Activated B cell treated with CpG ODN at 0.5 μM for 24 hours (primary cell): ENCODE measurements at regions of chr3 and their contacts with region 1.

Region 1: GRCh38 chr3:57692259-57693147 is at the start of gene DENND6A:
- DNase-seq: peak; percentile 95
- ATAC-seq: peak; percentile 86
- H3K4me3 Mint-ChIP-seq: peak within 1 kb of the TSS; percentile 89
- H3K27ac Mint-ChIP-seq: peak within 1 kb of the TSS; percentile 85
- H3K4me1 Mint-ChIP-seq: peaks cover 35% of the 10 kb centered on the region
- H3K27me3 Mint-ChIP-seq: no peaks in the 10 kb centered on the region
- CTCF ChIP-seq: no peak
- total RNA-seq, gene DENND6A: 21.5 and 25.7 TPM in 2 replicates

Region 2: DNA sequence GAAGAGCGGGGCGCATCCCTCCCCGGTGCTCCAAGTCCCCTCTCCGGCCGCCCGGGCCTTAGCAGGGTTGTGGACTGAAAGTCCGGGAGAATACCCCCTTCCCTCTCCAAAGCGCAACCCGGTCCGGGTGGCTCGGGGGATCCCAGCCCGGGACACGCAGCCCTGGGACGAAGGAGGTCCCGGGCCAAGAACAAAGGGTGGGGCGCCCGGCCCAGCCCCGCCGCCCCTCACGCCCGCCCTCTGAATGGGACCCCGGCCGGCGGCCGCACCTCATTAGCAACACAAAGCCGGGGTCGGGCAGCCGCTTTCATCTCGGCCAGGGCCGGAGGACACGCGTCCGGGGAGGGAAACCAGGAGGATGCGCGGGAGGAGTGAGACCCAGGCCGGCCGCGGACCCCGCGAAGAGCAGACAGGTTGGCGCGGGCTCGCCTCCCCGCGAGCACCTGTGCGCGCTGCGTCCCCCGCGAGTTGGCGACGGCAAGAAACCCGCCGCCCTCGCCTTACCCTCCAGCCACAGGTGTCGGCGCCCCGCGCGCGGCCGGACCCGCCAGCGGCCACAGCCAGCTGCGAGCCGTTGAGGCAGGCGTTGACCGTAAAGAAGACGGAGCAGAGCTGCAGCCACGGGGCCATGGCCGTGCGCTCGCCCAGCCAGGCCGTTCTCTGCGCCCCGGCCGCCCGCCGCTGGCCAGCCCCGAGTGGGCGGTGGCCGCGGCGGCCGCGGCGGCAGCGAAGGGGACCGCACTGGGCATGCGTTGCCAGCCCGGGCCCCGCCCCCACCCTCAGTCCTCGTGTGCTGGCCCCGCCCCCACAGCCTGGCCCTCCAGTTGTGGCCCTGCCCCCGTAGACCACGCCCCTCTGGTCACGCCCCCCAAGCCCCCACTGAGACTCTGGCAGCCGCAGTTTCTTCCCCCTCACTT is 527.6 kb before region 1 on chr3 and contains the start of gene IL17RD:
- CTCF ChIA-PET with region 1: no interaction called
- POLR2A ChIA-PET with region 1: no interaction called
- intact Hi-C with region 1: no loop called
- DNase-seq: peak; percentile 60
- ATAC-seq: peak; percentile 93
- H3K4me3 Mint-ChIP-seq: peak within 1 kb of the TSS; percentile 84
- H3K27ac Mint-ChIP-seq: no peak within 1 kb of the TSS
- H3K4me1 Mint-ChIP-seq: peaks cover 11% of the 10 kb centered on the region
- H3K27me3 Mint-ChIP-seq: peaks cover 48% of the 10 kb centered on the region
- CTCF ChIP-seq: no peak
- total RNA-seq, gene IL17RD: not detected in 2 replicates

Region 3: GRCh38 chr3:57587905-57588304 is 104.6 kb before region 1 on chr3:
- CTCF ChIA-PET with region 1: no interaction called
- POLR2A ChIA-PET with region 1: no interaction called
- intact Hi-C with region 1: no loop called
- DNase-seq: no peak
- ATAC-seq: no peak
- H3K4me3 Mint-ChIP-seq: no peak overlapping the region
- H3K27ac Mint-ChIP-seq: no peak overlapping the region
- H3K4me1 Mint-ChIP-seq: peaks cover 31% of the 10 kb centered on the region
- H3K27me3 Mint-ChIP-seq: no peaks in the 10 kb centered on the region
- CTCF ChIP-seq: no peak

Region 4: GRCh38 chr3:57755668-57756527 is 63.4 kb after region 1 on chr3 and contains the start of gene SLMAP:
- CTCF ChIA-PET with region 1: no interaction called
- POLR2A ChIA-PET with region 1: interaction called, 13 read pairs
- intact Hi-C with region 1: loop called (anchors 1 kb)
- DNase-seq: peak; percentile 87
- ATAC-seq: peak; percentile 94
- H3K4me3 Mint-ChIP-seq: peak within 1 kb of the TSS; percentile 95
- H3K27ac Mint-ChIP-seq: peak within 1 kb of the TSS; percentile 94
- H3K4me1 Mint-ChIP-seq: peaks cover 39% of the 10 kb centered on the region
- H3K27me3 Mint-ChIP-seq: no peaks in the 10 kb centered on the region
- CTCF ChIP-seq: no peak
- total RNA-seq, gene SLMAP: 45.4 and 57.1 TPM in 2 replicates

Region 5: DNA sequence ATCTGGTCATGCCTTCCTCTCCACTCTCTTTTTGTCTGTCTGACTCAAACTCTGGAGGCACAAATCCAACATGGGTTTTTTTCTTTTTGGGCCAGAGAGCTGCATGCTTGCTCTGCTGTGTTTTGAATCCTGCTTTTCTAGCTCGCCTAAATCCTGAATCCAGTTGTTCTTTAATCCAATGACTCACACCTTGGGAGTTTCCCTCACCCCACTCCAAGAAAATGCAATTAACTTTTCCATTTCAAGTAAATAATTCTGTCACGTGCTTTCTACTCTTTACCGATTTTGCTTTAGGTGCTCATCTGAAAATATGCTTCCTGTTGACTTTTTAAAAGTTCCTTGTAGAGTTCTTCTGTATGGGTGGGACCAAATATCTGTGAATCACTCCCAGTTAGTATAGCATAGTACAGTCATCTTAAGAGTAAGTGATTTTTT is 111.2 kb after region 1 on chr3:
- CTCF ChIA-PET with region 1: no interaction called
- POLR2A ChIA-PET with region 1: no interaction called
- intact Hi-C with region 1: no loop called
- DNase-seq: no peak
- ATAC-seq: no peak
- H3K4me3 Mint-ChIP-seq: peak overlapping the region; percentile 41
- H3K27ac Mint-ChIP-seq: peak overlapping the region; percentile 37
- H3K4me1 Mint-ChIP-seq: peaks cover 44% of the 10 kb centered on the region
- H3K27me3 Mint-ChIP-seq: no peaks in the 10 kb centered on the region
- CTCF ChIP-seq: no peak